Activated CD4-positive, alpha-beta T cell treated with anti-CD3 and anti-CD28 coated beads, Interleukin-2, amount 10 ng/mL, durations not matched to agents 24 days and 14 days (primary cell): ENCODE measurements at regions of chr2 and their contacts with region 1.

Region 1: GRCh38 chr2:134118279-134119116 is 135.4 kb upstream of the MGAT5 start:
- DNase-seq: peak; percentile 94
- H3K4me3 Mint-ChIP-seq: peak overlapping the region; percentile 94
- H3K27ac Mint-ChIP-seq: no peak overlapping the region
- H3K4me1 Mint-ChIP-seq: peaks cover 32% of the 10 kb centered on the region
- H3K27me3 Mint-ChIP-seq: peaks cover 20% of the 10 kb centered on the region

Region 2: DNA sequence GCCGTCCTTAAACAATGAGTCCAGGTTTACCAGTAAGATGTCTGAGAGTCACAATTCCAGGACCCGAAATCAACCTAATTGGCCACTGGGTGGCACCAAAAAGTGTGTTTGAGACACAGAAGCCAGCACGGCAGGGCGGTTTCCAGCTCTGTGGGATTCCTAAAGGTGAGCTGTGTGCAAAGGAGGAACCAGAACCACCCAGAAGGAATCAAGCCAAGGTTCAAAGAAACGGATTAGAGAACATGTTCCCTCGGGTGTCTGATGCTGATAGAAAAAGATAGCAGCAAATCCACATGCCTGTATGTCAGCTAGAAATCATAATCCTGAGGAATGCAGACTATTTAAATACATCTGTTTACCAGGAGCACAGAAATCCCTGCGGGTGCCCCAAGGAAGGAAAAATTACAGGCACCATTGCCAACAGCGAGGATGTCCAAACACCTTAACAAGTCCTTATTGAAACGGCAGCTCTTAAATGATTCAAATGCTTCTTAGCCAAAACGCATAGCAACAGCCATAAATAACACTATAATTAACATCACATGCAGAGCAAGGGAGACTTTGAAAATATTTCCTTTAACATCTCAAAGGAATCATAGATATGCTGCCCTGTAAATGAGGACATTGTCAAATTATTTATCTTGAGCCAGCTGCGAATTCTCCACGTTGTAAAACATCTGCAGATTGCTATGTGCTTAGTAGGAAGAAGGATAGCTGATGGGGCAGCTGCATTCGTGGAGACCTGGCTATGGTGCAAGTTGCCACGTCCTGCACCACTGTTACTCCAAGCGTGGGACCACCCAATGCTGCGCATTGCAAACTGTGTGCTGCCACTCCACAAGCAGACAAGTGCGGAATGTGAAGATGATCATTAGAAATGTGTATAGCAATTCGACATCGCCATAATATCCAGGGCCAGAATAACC is 231.5 kb before region 1 on chr2:
- intact Hi-C with region 1: loop called (anchors 10 kb)
- DNase-seq: peak; percentile 82
- H3K4me3 Mint-ChIP-seq: no peak overlapping the region
- H3K27ac Mint-ChIP-seq: no peak overlapping the region
- H3K4me1 Mint-ChIP-seq: no peaks in the 10 kb centered on the region
- H3K27me3 Mint-ChIP-seq: peaks cover 1% of the 10 kb centered on the region

Region 3: GRCh38 chr2:134207564-134208209 is 89.2 kb after region 1 on chr2:
- intact Hi-C with region 1: loop called (anchors 5 kb)
- DNase-seq: peak; percentile 84
- H3K4me3 Mint-ChIP-seq: no peak overlapping the region
- H3K27ac Mint-ChIP-seq: no peak overlapping the region
- H3K4me1 Mint-ChIP-seq: peaks cover 10% of the 10 kb centered on the region
- H3K27me3 Mint-ChIP-seq: no peaks in the 10 kb centered on the region

Region 4: DNA sequence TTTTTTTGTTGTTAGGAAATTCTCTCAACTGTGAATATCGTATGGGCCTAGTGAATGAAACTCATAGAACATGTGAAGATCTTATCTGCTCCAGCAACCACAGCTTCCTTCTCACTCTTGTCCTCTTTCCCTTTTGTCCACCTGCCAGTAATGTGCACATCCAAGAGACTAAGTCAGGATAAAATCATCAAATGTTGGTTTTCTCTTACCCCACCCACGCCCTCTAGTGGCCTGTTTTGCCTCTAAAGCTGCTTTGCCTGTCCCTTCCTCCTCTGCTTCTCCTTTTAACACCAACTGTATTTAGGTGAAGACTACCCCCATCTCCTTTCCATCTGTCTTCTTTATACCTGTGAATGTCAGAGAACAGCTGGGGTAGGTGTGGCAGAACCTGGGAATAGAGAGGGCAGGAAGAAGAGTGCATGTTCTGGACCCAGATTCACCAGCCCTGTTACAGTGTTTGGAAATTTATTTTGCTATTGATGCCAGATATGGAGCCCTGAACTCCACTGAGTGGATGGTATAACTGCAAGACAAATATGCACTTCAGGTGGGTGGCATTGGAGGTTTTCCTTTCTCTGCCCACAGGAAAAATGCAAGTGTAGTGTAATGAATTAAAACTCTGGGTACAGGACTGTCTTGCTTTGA is 127.0 kb after region 1 on chr2:
- intact Hi-C with region 1: loop called (anchors 1 kb)
- DNase-seq: peak; percentile 92
- H3K4me3 Mint-ChIP-seq: peak overlapping the region; percentile 56
- H3K27ac Mint-ChIP-seq: no peak overlapping the region
- H3K4me1 Mint-ChIP-seq: peaks cover 55% of the 10 kb centered on the region
- H3K27me3 Mint-ChIP-seq: peaks cover 2% of the 10 kb centered on the region

Region 5: DNA sequence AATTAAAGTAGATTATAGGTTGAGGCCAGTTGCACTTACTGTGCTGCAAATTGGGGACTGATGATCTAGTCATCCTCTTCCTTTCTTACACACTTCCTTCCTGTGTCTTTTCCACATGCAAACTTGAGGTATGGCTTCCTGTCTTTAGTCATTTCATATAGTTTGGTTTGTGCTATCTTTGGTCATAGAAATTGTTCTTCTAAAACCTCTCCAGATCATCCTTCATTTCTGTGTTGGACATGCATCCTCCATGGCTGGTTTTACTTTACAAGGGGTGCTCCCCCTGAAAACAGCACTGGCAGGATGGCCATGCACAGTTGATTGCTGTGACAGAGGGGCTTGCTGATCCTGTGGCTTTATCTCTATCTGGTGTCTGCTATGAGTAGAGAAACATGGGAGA is 171.9 kb after region 1 on chr2:
- intact Hi-C with region 1: loop called (anchors 1 kb)
- DNase-seq: peak; percentile 77
- H3K4me3 Mint-ChIP-seq: no peak overlapping the region
- H3K27ac Mint-ChIP-seq: no peak overlapping the region
- H3K4me1 Mint-ChIP-seq: peaks cover 30% of the 10 kb centered on the region
- H3K27me3 Mint-ChIP-seq: no peaks in the 10 kb centered on the region

Region 6: DNA sequence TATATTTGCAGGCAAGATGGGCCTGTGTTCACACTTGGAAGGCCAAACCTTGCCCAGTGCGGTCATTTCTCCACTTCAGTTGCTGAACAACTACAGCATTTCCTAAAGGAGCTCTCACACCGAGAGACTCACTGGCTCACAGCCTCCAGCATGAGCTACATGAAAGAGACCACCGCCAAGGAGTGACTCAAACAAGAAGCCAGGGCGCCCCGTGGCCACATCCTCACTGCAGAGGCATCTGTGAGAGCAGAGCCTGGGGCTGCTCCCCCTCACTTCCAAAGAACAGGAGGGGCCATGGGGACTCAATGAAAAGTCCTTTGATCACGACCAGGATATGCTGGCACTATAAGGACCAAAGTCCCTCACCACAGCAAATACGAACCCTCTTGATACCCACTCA is 550.3 kb after region 1 on chr2:
- intact Hi-C with region 1: loop called (anchors 2 kb)
- DNase-seq: peak; percentile 94
- H3K4me3 Mint-ChIP-seq: peak overlapping the region; percentile 61
- H3K27ac Mint-ChIP-seq: peak overlapping the region; percentile 46
- H3K4me1 Mint-ChIP-seq: peaks cover 62% of the 10 kb centered on the region
- H3K27me3 Mint-ChIP-seq: peaks cover 40% of the 10 kb centered on the region

Region 7: GRCh38 chr2:135052042-135052876 is 933.8 kb after region 1 on chr2 and contains the start of gene RAB3GAP1:
- intact Hi-C with region 1: loop called (anchors 2 kb)
- DNase-seq: peak; percentile 98
- H3K4me3 Mint-ChIP-seq: peak within 1 kb of the TSS; percentile 94
- H3K27ac Mint-ChIP-seq: peak within 1 kb of the TSS; percentile 100
- H3K4me1 Mint-ChIP-seq: peaks cover 38% of the 10 kb centered on the region
- H3K27me3 Mint-ChIP-seq: peaks cover 2% of the 10 kb centered on the region
- total RNA-seq, gene RAB3GAP1: 24.2 and 26.3 TPM in 2 replicates